ENCODE measurements at regions of chr16 and their contacts with region 1.

Region 1: GRCh38 chr16:19722269-19722952 is 4.3 kb downstream of the IQCK start:
- DNase-seq: no peak
- ATAC-seq: no peak
- H3K4me3 ChIP-seq: no peak overlapping the region
- H3K27ac ChIP-seq: no peak overlapping the region
- H3K4me1 ChIP-seq: peaks cover 8% of the 10 kb centered on the region
- H3K27me3 ChIP-seq: no peaks in the 10 kb centered on the region
- CTCF ChIP-seq: no peak

Region 2: GRCh38 chr16:19680881-19681340 is 41.5 kb before region 1 on chr16:
- intact Hi-C with region 1: loop called (anchors 5 kb)
- DNase-seq: no peak
- ATAC-seq: peak; percentile 32
- H3K4me3 ChIP-seq: no peak overlapping the region
- H3K27ac ChIP-seq: no peak overlapping the region
- H3K4me1 ChIP-seq: no peaks in the 10 kb centered on the region
- H3K27me3 ChIP-seq: no peaks in the 10 kb centered on the region
- CTCF ChIP-seq: peak; percentile 6

Region 3: GRCh38 chr16:19963301-19963700 is 240.9 kb after region 1 on chr16:
- intact Hi-C with region 1: no loop called
- DNase-seq: no peak
- ATAC-seq: no peak
- H3K4me3 ChIP-seq: no peak overlapping the region
- H3K27ac ChIP-seq: no peak overlapping the region
- H3K4me1 ChIP-seq: no peaks in the 10 kb centered on the region
- H3K27me3 ChIP-seq: no peaks in the 10 kb centered on the region
- CTCF ChIP-seq: no peak

Measured in upper lobe of right lung (tissue), 1 donor.